H1 (cell line): ENCODE measurements at regions of chr12 and their contacts with region 1.

Region 1: GRCh38 chr12:3275171-3276041 is 198.2 kb downstream of the TSPAN9 start:
- DNase-seq: peak; percentile 23 to 97
- H3K4me3 ChIP-seq: 0 out of 8 replicates have a peak overlapping the region, but pooled peaks of 1 of the 4 experiments have one; percentile 20
- H3K27ac ChIP-seq: no peak overlapping the region
- H3K4me1 ChIP-seq: peaks cover 0 to 15% (median 7%) of the 10 kb centered on the region in 4 experiments
- H3K27me3 ChIP-seq: no peaks in the 10 kb centered on the region
- CTCF ChIP-seq: peak in 2 of 3 experiments; percentile 95 to 96; a peak in 3 of 4 replicates
- EP300 ChIP-seq: no peak
- POLR2A ChIP-seq: no peak
- RAD21 ChIP-seq: peak; percentile 92 to 96

Region 2: DNA sequence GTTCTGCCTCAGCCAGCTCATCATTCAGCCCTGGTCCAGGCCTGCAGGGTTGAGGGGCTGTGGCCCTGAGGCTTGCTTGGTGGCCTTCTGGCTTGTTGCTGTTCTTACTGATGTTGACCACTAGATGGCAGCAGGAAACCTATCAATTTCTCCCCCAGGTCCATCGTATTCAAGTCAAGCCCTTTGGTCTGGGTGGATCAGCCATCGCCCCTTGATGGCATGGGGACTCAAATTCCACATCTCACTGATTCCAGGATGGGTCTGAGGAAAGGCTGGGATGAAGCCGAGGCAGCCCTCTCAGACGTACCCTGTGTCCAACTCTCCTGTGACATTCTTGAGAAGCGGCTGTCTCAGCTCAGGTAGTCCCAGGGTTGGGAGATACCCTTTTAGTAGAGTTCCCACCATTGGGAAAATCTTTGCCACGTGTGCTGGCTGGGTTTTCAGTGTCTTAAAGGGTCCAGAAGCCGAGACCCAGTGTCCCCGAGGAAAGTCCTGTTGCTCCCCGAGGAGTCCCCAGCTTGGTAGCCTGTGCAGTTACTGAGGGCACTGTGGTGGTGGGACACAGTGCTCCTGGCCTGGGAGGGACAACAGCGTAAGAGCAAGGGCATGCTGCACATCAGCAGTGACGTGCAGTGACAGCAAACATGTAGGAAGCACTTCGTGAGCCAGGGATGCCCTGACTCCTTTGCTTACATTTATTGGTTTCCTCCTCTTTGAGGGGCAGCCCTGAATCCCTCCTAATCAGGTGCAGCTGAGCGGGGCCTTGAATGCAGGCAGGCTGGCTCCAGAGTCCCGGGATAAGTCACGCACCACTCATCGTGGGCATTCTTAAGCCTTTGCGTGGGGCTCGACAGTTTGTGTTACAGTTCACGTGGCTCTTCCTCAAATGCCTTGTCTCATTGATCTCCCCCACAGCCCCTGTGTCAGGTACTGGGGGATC is 139.6 kb before region 1 on chr12:
- CTCF ChIA-PET with region 1: interaction called, 226 read pairs
- POLR2A ChIA-PET with region 1: interaction called, 3 read pairs
- DNase-seq: peak; percentile 58 to 63
- H3K4me3 ChIP-seq: no peak overlapping the region
- H3K27ac ChIP-seq: no peak overlapping the region
- H3K4me1 ChIP-seq: peaks cover 2 to 32% (median 20%) of the 10 kb centered on the region in 4 experiments
- H3K27me3 ChIP-seq: no peaks in the 10 kb centered on the region
- CTCF ChIP-seq: peak in 2 of 3 experiments; percentile 88 to 93; a peak in 3 of 4 replicates
- EP300 ChIP-seq: no peak
- POLR2A ChIP-seq: no peak
- RAD21 ChIP-seq: peak; percentile 97 to 99

Region 3: DNA sequence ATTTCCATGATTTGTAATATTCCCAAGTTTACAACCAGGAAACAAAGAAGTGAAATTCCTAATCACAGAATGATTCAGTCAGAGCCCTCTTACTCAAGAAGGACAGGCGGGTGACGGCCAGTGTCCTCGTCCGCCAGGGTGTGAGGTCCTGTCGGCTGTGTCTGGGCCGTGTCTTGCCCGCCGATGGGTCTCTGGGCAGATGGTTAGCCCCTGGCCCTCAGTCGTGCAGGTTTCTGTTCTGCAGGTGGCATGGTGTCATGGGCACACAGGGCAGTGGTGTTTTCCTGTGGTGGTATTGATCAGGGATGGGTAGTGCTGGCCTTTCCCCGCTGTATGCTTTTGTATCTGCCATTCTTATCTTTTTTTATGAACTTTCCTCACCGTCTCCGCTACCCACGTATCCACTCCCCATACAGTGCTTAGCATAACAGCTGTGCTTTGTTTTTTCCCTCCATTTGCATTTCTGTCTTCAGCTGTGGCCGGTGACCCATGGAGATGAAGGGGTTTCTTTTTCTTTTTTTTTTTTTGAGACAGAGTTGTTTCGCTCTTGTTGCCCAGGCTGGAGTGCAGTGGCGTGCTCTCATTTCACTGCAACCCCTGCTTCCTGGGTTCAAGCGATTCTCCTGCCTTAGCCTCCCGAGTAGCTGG is 97.5 kb before region 1 on chr12:
- CTCF ChIA-PET with region 1: interaction called, 10 read pairs
- POLR2A ChIA-PET with region 1: no interaction called
- DNase-seq: no peak
- H3K4me3 ChIP-seq: no peak overlapping the region
- H3K27ac ChIP-seq: no peak overlapping the region
- H3K4me1 ChIP-seq: peaks cover 2 to 11% (median 5%) of the 10 kb centered on the region in 4 experiments; a peak in 6 of 7 replicates
- H3K27me3 ChIP-seq: no peaks in the 10 kb centered on the region
- CTCF ChIP-seq: no peak
- EP300 ChIP-seq: no peak
- POLR2A ChIP-seq: no peak
- RAD21 ChIP-seq: no peak

Region 4: DNA sequence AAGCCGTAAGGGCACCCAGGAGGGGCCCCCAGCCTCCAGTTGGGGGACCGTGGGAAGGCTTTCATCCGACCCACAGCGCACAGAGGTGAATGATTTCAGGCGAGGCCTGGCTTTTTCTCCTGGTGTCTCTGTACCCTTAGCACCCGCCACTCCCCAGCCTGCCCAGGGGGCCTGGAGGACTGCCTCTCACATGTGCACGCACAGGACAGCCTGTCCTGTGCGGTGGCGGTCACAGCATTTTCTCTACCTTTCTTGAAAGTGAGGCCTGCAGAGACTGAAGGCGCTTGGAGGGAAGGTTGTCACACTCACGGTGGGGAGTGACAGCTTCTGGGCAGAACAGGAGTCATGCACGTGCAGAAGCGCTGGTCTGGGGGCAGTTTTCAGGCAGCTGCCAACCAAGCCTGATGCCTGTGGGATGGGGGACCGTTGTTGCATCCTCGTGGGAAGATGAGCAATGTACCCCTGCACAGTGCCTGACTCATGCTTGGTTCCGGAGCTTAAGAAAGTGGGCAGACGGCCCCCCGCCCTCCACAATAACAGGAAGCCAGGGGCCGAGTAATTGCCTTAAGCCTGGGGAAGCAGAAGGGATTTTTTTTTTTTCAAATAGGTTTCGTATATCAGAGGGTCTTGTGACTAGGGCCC is 50.1 kb before region 1 on chr12:
- CTCF ChIA-PET with region 1: interaction called, 37 read pairs
- POLR2A ChIA-PET with region 1: no interaction called
- DNase-seq: no peak
- H3K4me3 ChIP-seq: no peak overlapping the region
- H3K27ac ChIP-seq: no peak overlapping the region
- H3K4me1 ChIP-seq: peaks cover 0 to 18% (median 4%) of the 10 kb centered on the region in 4 experiments; a peak in 3 of 7 replicates
- H3K27me3 ChIP-seq: no peaks in the 10 kb centered on the region
- CTCF ChIP-seq: no peak
- EP300 ChIP-seq: no peak
- POLR2A ChIP-seq: no peak
- RAD21 ChIP-seq: no peak

Region 5: GRCh38 chr12:3242199-3242863 is 33.1 kb before region 1 on chr12:
- CTCF ChIA-PET with region 1: interaction called, 28 read pairs
- POLR2A ChIA-PET with region 1: interaction called, 5 read pairs
- DNase-seq: no peak
- H3K4me3 ChIP-seq: no peak overlapping the region
- H3K27ac ChIP-seq: no peak overlapping the region
- H3K4me1 ChIP-seq: peaks cover 0 to under 1% (median 0%) of the 10 kb centered on the region in 4 experiments; a peak in 4 of 7 replicates
- H3K27me3 ChIP-seq: no peaks in the 10 kb centered on the region
- CTCF ChIP-seq: peak in 1 of 3 experiments; percentile 9; a peak in 1 of 4 replicates
- EP300 ChIP-seq: no peak
- POLR2A ChIP-seq: no peak
- RAD21 ChIP-seq: no peak; a peak in 1 of 4 replicates

Region 6: DNA sequence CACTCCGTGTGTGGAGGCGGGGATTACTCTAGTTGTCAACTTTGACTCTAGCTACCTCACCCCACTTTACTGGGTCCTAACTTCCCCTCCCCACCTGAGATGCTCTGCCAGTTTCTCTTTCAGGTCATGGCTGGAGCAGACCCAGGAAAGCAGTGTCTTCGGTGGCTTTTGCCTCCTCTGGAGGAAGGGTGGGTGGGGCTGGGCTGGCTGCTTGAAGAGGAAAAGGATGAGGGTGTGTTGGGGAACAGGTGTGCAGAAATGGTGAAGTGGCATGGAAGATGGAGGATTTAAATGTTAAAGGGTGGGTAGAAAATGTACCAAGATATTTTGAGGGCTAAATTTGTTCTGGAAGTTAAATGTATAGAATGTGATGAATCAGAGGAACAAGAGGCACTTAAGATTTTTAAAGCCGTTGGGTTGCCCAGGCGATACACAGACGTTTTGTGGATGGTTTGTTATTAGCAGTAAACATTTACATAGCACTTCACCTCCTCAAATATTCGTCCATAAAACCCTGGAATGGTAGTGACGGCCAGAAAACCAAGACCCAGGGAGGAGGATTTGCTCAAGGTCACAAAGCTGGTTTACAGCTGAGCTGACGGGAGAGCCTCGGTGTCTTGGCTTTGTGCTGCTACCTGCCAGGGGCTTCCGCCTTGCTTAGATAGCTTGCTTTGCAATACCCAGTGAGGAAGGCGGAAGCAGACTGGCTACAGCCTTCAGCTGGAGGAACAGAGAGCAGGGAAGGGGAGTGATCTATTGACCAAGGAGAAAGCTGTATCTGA is 143.4 kb after region 1 on chr12:
- CTCF ChIA-PET with region 1: no interaction called
- POLR2A ChIA-PET with region 1: no interaction called
- DNase-seq: no peak
- H3K4me3 ChIP-seq: no peak overlapping the region
- H3K27ac ChIP-seq: no peak overlapping the region
- H3K4me1 ChIP-seq: peaks cover 8 to 17% (median 11%) of the 10 kb centered on the region in 4 experiments
- H3K27me3 ChIP-seq: peaks cover 1 to 9% (median 6%) of the 10 kb centered on the region in 4 experiments; a peak in 5 of 7 replicates
- CTCF ChIP-seq: no peak
- EP300 ChIP-seq: no peak
- POLR2A ChIP-seq: no peak
- RAD21 ChIP-seq: no peak